Activated B cell treated with CpG ODN at 0.5 μM for 24 hours (primary cell): ENCODE measurements at regions of chr6 and their contacts with region 1.

Region 1: GRCh38 chr6:14612016-14612980 is 494.7 kb downstream of the CD83 start:
- DNase-seq: no peak
- ATAC-seq: no peak
- H3K4me3 Mint-ChIP-seq: no peak overlapping the region
- H3K27ac Mint-ChIP-seq: no peak overlapping the region
- H3K4me1 Mint-ChIP-seq: peaks cover 27% of the 10 kb centered on the region
- H3K27me3 Mint-ChIP-seq: no peaks in the 10 kb centered on the region
- CTCF ChIP-seq: no peak

Region 2: DNA sequence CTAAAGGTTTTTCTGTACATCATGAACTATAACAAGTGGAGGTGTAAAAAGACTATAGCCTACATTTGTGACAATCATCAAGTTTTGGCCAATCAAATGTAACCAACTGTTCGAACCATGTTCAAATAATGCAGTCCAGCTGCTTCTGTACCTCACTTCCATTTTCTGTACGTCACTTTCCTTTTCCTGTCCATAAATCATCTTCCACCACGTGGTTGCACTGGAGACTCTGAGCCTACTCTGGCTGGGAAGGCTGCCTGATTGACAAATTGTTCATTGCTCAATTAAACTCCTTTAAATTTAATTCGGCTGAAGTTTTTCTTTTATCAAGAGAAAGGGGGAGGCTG is 363.1 kb after region 1 on chr6:
- CTCF ChIA-PET with region 1: no interaction called
- POLR2A ChIA-PET with region 1: interaction called, 10 read pairs
- intact Hi-C with region 1: no loop called
- DNase-seq: no peak
- ATAC-seq: no peak
- H3K4me3 Mint-ChIP-seq: no peak overlapping the region
- H3K27ac Mint-ChIP-seq: no peak overlapping the region
- H3K4me1 Mint-ChIP-seq: peaks cover 8% of the 10 kb centered on the region
- H3K27me3 Mint-ChIP-seq: no peaks in the 10 kb centered on the region
- CTCF ChIP-seq: no peak